HEK293 (cell line): ENCODE measurements at regions of chr11 and their contacts with region 1.

Region 1: GRCh38 chr11:72030472-72031045 is 31.9 kb downstream of the IL18BP start:
- H3K4me3 ChIP-seq: no peak overlapping the region
- H3K27ac ChIP-seq: no peak overlapping the region
- H3K4me1 ChIP-seq: no peaks in the 10 kb centered on the region
- CTCF ChIP-seq: no peak

Region 2: GRCh38 chr11:71913756-71914526 is 116.6 kb before region 1 on chr11:
- CTCF ChIA-PET with region 1: no interaction called
- POLR2A ChIA-PET with region 1: no interaction called
- H3K4me3 ChIP-seq: no peak overlapping the region
- H3K27ac ChIP-seq: no peak overlapping the region
- H3K4me1 ChIP-seq: no peaks in the 10 kb centered on the region
- CTCF ChIP-seq: no peak

Region 3: DNA sequence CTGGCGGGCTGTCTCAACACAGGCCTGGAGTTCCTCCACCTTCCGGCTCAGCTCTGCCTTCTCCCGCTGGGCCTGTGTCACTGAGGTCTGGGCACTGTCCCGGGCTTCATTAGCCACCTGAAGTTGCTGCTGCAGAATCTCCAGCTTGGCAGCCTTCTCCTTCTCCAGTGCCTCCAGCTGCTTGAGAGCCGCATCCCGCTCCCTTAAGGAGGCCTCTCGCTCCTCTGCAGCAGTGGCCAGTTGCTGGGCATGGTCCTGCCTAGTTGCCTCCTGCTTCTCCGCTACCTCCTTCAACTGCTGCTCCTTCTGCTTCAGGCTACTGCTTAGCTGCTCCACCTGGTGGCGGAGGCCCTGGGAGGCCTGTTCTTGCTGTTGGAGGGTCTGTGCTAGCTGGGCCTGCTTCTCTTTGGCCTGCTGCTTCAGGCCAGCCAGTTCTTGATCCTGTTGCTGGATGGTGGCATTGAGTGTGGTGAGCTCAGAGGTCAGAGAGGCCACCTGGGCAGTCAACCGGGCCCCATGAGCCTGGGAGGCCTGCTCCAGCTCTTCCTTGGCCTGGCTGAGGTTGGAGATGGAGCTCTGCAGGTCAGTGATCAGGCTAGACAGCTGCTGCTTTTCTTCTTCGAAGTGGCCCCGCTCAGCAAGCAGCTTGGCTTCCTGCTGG is 14.9 kb before region 1 on chr11:
- CTCF ChIA-PET with region 1: interaction called, 37 read pairs
- POLR2A ChIA-PET with region 1: interaction called, 4 read pairs
- H3K4me3 ChIP-seq: no peak overlapping the region
- H3K27ac ChIP-seq: no peak overlapping the region
- H3K4me1 ChIP-seq: no peaks in the 10 kb centered on the region
- CTCF ChIP-seq: peak; percentile 64; the same call in 1 of the 2 replicates

Region 4: GRCh38 chr11:72085621-72086351 is 55.2 kb after region 1 on chr11:
- CTCF ChIA-PET with region 1: interaction called, 184 read pairs
- POLR2A ChIA-PET with region 1: interaction called, 9 read pairs
- H3K4me3 ChIP-seq: no peak overlapping the region
- H3K27ac ChIP-seq: no peak overlapping the region
- H3K4me1 ChIP-seq: no peaks in the 10 kb centered on the region
- CTCF ChIP-seq: no peak

Region 5: GRCh38 chr11:72141066-72141465 is 110.5 kb after region 1 on chr11:
- CTCF ChIA-PET with region 1: interaction called, 35 read pairs
- POLR2A ChIA-PET with region 1: no interaction called
- H3K4me3 ChIP-seq: no peak overlapping the region
- H3K27ac ChIP-seq: no peak overlapping the region
- H3K4me1 ChIP-seq: no peaks in the 10 kb centered on the region
- CTCF ChIP-seq: no peak

Region 6: DNA sequence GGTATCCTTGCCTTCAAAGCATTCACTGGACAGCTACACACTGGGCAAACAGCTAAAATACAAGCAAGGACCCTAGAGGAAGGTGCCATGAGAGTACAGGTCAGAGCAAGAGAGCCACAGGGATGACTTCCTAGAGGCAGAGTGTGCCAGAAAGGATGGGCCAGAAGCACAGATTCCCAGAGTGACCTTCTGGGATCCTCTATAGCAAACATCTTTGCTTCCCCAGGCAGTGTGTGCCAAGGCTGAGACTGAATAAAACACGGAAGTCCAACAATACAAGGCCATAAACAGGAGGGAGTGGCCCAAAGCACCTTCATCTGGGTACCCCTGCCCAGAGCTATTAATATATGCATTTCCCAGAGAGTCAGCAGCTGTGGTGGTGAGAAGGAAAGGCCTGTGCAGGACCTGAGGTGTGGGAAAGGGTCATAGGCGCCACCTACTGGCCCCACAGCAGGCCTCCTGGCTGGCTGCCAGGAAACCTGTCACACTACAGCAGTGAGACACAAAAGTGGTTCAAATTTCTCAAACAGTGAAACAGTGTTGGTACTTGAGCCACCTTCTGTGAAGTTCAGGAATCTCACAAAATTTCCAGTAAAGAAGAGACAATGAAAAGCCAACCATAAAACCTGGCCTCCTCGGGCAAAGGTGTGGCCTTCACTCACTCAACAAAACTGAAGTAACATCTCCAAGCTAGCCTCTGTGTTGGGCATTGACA is 383.5 kb after region 1 on chr11:
- CTCF ChIA-PET with region 1: interaction called, 10 read pairs
- POLR2A ChIA-PET with region 1: no interaction called
- H3K4me3 ChIP-seq: no peak overlapping the region
- H3K27ac ChIP-seq: no peak overlapping the region
- H3K4me1 ChIP-seq: peaks cover 5% of the 10 kb centered on the region; the same call in 1 of the 2 replicates
- CTCF ChIP-seq: peak; percentile 76